ENCODE measurements at regions of chr4 and their contacts with region 1.

Region 1: DNA sequence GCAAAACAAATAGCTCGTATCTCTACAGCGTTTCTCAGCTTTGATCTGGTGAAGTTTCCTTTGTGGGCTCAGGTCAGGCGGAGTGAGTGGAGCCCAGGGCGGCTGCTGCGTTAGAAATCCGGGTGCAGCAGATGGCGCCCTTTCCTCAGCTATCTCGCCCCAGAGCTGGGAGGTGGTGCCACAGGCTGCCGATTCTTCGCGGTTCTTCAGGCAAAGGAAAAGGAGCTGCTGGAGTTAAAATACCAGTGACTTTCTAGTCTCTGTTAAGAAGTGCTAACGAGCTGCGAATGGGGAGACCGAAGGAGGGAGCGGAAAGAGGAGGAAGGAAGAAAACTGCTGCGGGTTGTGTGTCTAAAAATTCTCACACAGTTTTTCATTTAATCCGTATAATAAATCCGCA is 114.6 kb downstream of the CPE start:
- DNase-seq: peak; percentile 64
- H3K4me3 ChIP-seq: peak overlapping the region in 1 of 3 experiments; percentile 31
- H3K27ac ChIP-seq: no peak overlapping the region
- H3K4me1 ChIP-seq: peaks cover 3% of the 10 kb centered on the region
- H3K27me3 ChIP-seq: no peaks in the 10 kb centered on the region
- CTCF ChIP-seq: peak; percentile 71 to 81
- POLR2A ChIP-seq: no peak

Region 2: DNA sequence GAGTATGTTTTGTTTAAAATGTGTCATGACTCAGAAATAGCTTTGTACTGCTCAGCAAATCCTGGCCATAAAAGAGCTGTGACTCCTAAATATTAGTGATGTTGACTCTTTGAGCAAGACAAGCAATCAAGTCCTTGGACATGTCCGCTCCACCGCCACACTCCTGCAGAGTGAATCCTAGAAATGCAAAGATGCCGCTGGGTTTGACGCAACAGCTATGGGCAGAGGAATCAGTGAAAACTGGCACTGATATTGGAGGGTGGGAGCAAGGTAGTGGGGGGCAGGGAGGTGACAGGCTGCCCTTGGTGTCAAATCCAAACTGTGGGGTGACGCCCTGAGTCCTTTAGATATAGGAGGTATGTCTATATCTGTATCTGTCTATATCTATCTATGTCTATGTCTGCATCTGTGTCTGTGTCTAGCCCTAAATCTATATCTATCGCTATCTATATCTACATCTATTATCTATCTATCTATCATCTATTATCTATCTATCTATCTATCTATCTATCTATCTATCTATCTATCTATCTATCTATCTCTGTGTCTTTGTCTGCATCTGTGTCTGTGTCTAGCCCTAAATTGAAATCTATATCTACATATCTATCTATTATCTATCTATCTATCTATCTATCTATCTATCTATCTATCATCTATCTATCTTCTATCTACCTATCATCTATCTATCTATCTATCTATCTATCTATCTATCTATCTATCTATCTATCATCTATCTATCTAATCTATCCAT is 15.2 kb after region 1 on chr4:
- CTCF ChIA-PET with region 1: interaction called, 30 read pairs
- POLR2A ChIA-PET with region 1: no interaction called
- dilution Hi-C with region 1: no loop called
- intact Hi-C with region 1: no loop called
- DNase-seq: no peak
- H3K4me3 ChIP-seq: no peak overlapping the region
- H3K27ac ChIP-seq: no peak overlapping the region
- H3K4me1 ChIP-seq: peaks cover 9% of the 10 kb centered on the region
- H3K27me3 ChIP-seq: no peaks in the 10 kb centered on the region
- CTCF ChIP-seq: no peak
- POLR2A ChIP-seq: no peak

Region 3: DNA sequence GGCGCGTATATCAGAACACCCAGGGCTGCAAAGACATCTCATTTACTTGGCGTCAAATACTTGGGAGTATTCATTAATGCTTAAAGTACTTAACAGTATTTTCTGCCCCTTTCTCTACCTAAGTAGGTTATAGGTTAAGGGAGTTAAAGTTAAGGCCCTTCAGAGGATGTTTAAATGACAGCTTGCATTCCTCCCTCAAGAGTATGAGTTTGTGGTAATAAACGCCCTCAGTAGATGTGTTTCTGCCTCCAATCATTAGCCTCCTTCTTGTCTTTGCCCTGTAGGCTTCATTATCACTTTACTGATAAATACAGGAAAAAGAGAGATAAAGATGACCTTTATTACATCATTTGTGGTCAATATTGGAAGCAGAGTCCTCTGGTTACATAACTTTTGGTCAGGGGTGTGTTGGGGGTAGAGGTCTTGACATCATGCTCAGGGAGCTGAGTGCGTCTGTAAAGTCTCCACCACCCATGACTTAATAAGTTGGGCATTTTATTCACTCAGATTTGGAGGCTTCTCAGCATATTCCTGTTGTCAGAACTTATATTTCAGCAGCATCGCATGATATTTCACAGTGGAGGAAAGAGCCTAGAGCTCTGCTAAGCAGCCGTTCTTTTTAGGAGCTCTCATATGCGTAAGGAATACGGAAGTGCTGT is 31.3 kb after region 1 on chr4:
- CTCF ChIA-PET with region 1: interaction called, 16 read pairs
- POLR2A ChIA-PET with region 1: no interaction called
- dilution Hi-C with region 1: no loop called
- intact Hi-C with region 1: no loop called
- DNase-seq: no peak
- H3K4me3 ChIP-seq: no peak overlapping the region
- H3K27ac ChIP-seq: no peak overlapping the region
- H3K4me1 ChIP-seq: no peaks in the 10 kb centered on the region
- H3K27me3 ChIP-seq: no peaks in the 10 kb centered on the region
- CTCF ChIP-seq: no peak
- POLR2A ChIP-seq: no peak

Region 4: GRCh38 chr4:165855191-165855590 is 361.8 kb after region 1 on chr4:
- CTCF ChIA-PET with region 1: interaction called, 10 read pairs
- POLR2A ChIA-PET with region 1: no interaction called
- dilution Hi-C with region 1: no loop called
- intact Hi-C with region 1: loop called (anchors 5 kb)
- DNase-seq: peak; percentile 16
- H3K4me3 ChIP-seq: no peak overlapping the region
- H3K27ac ChIP-seq: no peak overlapping the region
- H3K4me1 ChIP-seq: no peaks in the 10 kb centered on the region
- H3K27me3 ChIP-seq: no peaks in the 10 kb centered on the region
- CTCF ChIP-seq: no peak
- POLR2A ChIP-seq: no peak

Region 5: GRCh38 chr4:166091912-166092510 is 598.7 kb after region 1 on chr4:
- CTCF ChIA-PET with region 1: interaction called, 82 read pairs
- POLR2A ChIA-PET with region 1: no interaction called
- dilution Hi-C with region 1: no loop called
- intact Hi-C with region 1: loop called (anchors 1 kb)
- DNase-seq: peak; percentile 43
- H3K4me3 ChIP-seq: no peak overlapping the region
- H3K27ac ChIP-seq: no peak overlapping the region
- H3K4me1 ChIP-seq: no peaks in the 10 kb centered on the region
- H3K27me3 ChIP-seq: no peaks in the 10 kb centered on the region
- CTCF ChIP-seq: peak; percentile 31 to 47
- POLR2A ChIP-seq: no peak

Region 6: DNA sequence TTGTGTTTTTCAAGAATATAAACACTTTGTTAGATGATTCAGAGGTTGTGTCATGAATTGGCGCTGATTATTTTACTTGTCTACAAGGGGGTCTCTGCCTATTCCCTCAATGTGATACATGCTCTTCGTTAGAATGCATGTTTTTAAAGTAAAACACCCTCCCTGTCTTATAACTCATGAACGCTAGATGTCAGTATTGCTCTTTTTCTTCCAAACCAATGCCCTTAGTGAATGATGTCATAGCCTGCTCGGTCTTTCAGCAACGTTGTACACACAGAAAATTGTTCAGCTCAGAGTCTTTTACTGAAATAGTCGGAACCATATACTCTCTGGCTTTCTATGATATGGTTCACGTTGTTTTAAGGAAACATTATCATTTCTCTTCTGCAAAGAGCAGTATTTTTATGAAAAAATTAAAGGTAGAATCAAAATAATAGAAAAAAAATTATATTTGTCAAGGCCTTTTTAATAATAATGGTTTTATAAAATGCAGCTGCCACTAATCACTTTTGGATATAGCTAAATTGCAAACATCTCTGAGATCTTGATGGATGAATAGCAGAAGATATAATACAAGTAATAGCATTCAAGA is 672.6 kb after region 1 on chr4:
- CTCF ChIA-PET with region 1: interaction called, 21 read pairs
- POLR2A ChIA-PET with region 1: no interaction called
- dilution Hi-C with region 1: no loop called
- intact Hi-C with region 1: loop called (anchors 5 kb)
- DNase-seq: peak; percentile 77
- H3K4me3 ChIP-seq: no peak overlapping the region
- H3K27ac ChIP-seq: no peak overlapping the region
- H3K4me1 ChIP-seq: no peaks in the 10 kb centered on the region
- H3K27me3 ChIP-seq: peaks cover 0 to 4% of the 10 kb centered on the region in 2 experiments
- CTCF ChIP-seq: peak; percentile 56 to 64
- POLR2A ChIP-seq: no peak

Region 7: DNA sequence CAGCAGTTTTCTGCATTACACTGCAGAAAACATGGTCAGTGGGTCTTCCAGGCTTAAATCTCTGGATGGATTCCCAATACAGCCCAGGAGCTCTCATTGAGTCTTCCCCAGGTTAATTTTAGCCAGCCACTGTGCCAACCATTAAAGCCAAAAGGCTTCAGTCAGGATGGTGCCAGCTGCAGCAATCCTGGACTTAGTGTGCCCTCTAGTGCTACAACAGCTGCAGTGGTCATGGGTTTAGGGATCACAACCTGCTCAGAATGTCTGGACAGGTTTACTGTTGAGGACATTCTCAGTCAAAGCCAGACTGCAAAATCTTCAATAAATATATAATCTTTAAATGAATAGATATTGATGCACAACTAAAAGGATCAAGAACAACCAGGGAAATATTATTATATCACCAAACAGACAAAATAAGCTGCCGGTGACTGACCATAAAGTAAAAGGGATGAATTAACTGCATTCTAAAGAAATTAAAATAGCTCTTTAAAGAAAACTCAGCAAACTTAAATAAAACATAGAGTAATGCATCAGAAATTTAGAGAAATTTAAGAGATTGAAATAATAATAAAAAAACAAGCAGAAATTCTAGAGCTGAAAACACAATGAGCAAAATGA is 1101.1 kb after region 1 on chr4:
- CTCF ChIA-PET with region 1: interaction called, 10 read pairs
- POLR2A ChIA-PET with region 1: no interaction called
- dilution Hi-C with region 1: no loop called
- intact Hi-C with region 1: loop called (anchors 5 kb)
- DNase-seq: no peak
- H3K4me3 ChIP-seq: no peak overlapping the region
- H3K27ac ChIP-seq: no peak overlapping the region
- H3K4me1 ChIP-seq: no peaks in the 10 kb centered on the region
- H3K27me3 ChIP-seq: no peaks in the 10 kb centered on the region
- CTCF ChIP-seq: no peak
- POLR2A ChIP-seq: no peak